Sigmoid colon (tissue), 7 donors: ENCODE measurements at regions of chr14 and their contacts with region 1.

Region 1: GRCh38 chr14:76647697-76648298 is 113.5 kb upstream of the VASH1 start:
- DNase-seq: no peak
- H3K4me3 ChIP-seq: no peak overlapping the region
- H3K27ac ChIP-seq: no peak overlapping the region
- H3K4me1 ChIP-seq: peaks cover 0 to 3% (median 0%) of the 10 kb centered on the region in 4 donors
- H3K27me3 ChIP-seq: no peaks in the 10 kb centered on the region
- CTCF ChIP-seq: peak; percentile 49 to 77 (median 62)
- EP300 ChIP-seq: no peak
- POLR2A ChIP-seq: no peak

Region 2: DNA sequence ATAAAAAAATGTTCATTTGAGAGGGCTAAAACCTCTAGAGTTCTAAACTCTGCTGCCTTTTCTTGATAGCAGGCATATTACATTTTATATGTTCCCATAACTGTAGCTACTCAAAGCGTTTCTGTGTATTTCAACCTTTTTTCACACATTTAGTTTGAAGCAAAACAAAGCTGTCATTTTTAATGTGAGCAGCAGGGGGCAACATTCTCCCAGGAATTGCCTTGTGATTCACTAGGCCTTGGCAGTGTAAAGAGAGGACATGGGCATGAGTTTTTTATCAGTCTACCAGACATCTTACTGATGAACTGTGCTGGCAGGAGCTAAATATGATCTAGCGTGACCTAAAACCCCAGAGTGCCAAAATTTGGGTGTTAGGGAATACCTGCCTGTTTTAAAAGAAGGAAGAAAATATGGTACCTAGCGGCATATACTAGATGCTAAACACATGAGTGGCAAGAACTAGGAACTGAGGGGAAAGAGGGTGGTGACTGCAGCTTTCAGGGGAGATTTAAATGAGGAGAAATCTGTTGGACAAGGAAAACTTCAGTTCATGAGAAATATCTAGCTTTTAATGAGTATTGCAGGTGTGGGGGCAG is 596.9 kb before region 1 on chr14:
- intact Hi-C with region 1: loop called (anchors 1 kb)
- DNase-seq: no peak
- H3K4me3 ChIP-seq: no peak overlapping the region
- H3K27ac ChIP-seq: no peak overlapping the region
- H3K4me1 ChIP-seq: no peaks in the 10 kb centered on the region
- H3K27me3 ChIP-seq: no peaks in the 10 kb centered on the region
- CTCF ChIP-seq: peak; percentile 74 to 85 (median 76)
- EP300 ChIP-seq: no peak
- POLR2A ChIP-seq: no peak

Region 3: GRCh38 chr14:76168531-76168930 is 479.3 kb before region 1 on chr14:
- intact Hi-C with region 1: no loop called
- DNase-seq: no peak
- H3K4me3 ChIP-seq: no peak overlapping the region
- H3K27ac ChIP-seq: no peak overlapping the region
- H3K4me1 ChIP-seq: peaks cover 0 to 13% (median 8%) of the 10 kb centered on the region in 4 donors
- H3K27me3 ChIP-seq: no peaks in the 10 kb centered on the region
- CTCF ChIP-seq: no peak
- EP300 ChIP-seq: no peak
- POLR2A ChIP-seq: no peak

Region 4: DNA sequence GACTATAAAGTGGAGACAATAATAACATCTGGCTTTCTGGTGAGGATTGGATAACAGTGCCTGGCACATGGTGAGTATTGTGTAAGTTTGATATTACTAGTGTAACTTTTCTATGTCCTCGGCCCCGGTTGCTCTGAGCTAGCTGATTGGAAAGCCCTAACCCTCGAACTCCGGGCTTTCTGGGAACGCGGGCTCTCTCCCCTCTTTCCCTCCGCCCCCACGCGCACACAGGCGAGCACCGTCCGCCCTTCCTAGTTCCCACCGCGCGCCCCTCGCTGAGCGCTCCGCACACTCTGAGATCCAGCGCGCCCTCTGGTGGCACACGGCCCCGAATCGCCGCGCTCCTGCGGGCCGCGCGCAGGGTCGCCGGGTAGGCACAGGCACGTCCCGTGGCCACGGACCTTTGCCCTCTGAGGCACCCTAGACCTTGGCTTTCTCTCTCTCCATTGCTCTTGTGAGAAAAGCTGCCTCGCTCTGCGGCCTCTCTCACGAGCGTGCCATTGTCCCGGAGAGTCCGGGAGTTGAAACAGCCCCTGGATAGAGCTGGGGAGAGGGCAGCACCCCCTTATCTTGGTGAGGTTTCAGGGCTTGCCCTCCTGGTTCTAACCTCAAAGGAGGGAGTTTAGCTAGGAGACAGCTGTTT is 295.0 kb before region 1 on chr14:
- intact Hi-C with region 1: loop called (anchors 5 kb)
- DNase-seq: no peak
- H3K4me3 ChIP-seq: peak overlapping the region in 3 of 4 donors; percentile 28 to 41 (median 30)
- H3K27ac ChIP-seq: no peak overlapping the region
- H3K4me1 ChIP-seq: peaks cover 0 to 10% (median 6%) of the 10 kb centered on the region in 4 donors
- H3K27me3 ChIP-seq: peaks cover 0 to 7% (median 4%) of the 10 kb centered on the region in 3 donors
- CTCF ChIP-seq: peak; percentile 66 to 87 (median 74)
- EP300 ChIP-seq: no peak
- POLR2A ChIP-seq: no peak

Region 5: GRCh38 chr14:76456200-76456599 is 191.6 kb before region 1 on chr14:
- intact Hi-C with region 1: loop called (anchors 2 kb)
- DNase-seq: no peak
- H3K4me3 ChIP-seq: no peak overlapping the region
- H3K27ac ChIP-seq: no peak overlapping the region
- H3K4me1 ChIP-seq: no peaks in the 10 kb centered on the region
- H3K27me3 ChIP-seq: no peaks in the 10 kb centered on the region
- CTCF ChIP-seq: peak; percentile 23 to 33 (median 28)
- EP300 ChIP-seq: no peak
- POLR2A ChIP-seq: no peak

Region 6: DNA sequence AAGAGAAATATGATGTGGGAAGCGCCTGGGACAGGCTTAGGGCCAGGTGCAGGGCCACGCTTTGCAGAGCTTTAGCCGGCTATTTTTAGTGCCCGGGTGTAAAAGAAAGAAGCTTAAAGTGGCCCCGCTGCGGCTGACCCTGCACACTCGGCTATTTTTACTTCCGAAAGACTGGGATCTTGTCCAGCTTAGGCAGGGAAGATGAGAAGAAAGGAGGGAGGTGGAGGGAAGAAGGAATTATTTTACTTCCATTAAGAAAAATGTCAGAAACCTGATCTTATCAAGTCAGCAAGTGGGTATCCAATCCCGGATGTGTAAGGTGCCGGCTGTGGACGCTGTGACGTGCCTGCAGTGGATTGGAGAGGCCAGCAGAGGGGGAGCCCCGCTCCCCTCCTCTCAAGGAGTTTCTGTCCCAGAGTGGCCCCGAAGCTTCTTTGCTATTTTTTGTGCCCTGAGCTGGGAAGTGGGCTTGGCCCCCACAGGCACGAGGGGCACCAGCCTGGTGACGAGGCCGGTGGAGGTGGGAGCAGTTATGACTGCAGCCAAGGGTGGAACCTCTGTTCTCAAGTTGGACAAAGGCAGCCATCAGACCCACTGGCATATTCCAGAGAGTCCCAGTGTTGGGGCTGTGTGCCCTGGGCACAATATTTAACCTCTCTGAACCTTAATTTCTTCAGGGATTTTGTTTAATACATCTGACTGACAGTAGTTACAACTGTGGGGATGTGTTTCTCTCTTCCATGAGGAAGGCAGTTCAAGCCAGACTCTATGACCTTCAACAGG is 174.1 kb before region 1 on chr14:
- intact Hi-C with region 1: loop called (anchors 5 kb)
- DNase-seq: no peak
- H3K4me3 ChIP-seq: peak overlapping the region in 3 of 4 donors; percentile 28 to 39 (median 35)
- H3K27ac ChIP-seq: peak overlapping the region in 2 of 4 donors; percentile 26 to 32
- H3K4me1 ChIP-seq: peaks cover 0 to 12% (median 9%) of the 10 kb centered on the region in 4 donors
- H3K27me3 ChIP-seq: no peaks in the 10 kb centered on the region
- CTCF ChIP-seq: peak in 1 of 4 experiments; percentile 32
- EP300 ChIP-seq: no peak
- POLR2A ChIP-seq: no peak

Region 7: DNA sequence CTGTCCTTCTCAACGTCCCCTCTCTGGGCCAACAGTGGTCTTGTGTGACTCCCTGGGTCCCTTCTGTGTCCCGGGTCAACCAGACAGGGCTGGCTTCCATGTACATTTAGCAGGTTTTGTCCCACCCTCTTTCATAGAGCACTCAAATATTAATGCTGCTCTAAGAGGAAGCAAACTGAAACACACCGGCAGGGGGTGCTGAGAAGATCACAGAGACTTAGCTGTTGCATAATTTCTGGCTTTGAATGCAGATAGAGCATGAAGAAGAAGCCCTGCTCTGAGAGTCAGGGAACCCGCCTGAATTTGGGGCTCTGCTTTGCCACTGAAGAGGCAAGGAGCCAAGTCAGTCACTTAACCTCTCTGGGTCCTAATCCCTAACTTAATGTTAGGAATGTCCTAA is 133.2 kb before region 1 on chr14:
- intact Hi-C with region 1: loop called (anchors 10 kb)
- DNase-seq: no peak
- H3K4me3 ChIP-seq: no peak overlapping the region
- H3K27ac ChIP-seq: no peak overlapping the region
- H3K4me1 ChIP-seq: no peaks in the 10 kb centered on the region
- H3K27me3 ChIP-seq: no peaks in the 10 kb centered on the region
- CTCF ChIP-seq: no peak
- EP300 ChIP-seq: no peak
- POLR2A ChIP-seq: no peak

Region 8: DNA sequence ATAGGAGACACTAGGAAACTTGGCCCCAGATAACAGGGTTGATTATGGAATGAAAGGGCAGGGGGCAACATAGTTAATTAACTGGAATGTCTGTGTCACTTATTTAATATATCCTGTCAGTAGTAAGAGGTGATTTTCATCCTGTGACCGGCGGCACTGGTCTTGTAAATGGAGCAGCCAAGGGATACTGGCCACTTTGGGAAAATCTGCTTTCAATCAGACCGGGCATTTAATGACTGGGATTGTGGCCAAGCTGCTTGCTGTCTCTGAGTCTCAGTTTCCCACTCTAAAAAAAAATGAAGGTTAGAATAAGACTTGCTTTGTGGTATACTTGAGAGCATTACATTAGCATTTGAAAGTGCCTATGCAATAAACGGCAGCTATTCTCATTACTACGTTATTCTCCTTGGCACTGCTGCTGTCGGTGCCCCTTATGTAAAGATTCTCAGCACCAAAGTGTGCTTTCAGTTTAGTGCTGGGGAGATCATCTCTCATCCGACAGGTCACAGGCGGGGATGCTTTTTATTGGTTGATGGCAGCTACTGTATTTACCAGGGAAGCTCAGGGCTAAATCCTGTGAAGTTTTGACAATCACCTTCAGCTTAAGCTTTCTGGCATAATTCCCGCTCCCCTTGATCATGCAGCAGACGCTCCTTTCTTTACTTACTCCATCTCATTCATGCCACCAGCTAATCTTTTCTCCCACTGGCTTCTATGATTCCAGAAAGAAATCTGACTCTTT is 109.7 kb before region 1 on chr14:
- intact Hi-C with region 1: loop called (anchors 5 kb)
- DNase-seq: peak; percentile 69
- H3K4me3 ChIP-seq: peak overlapping the region in 2 of 4 donors; percentile 1 to 16
- H3K27ac ChIP-seq: peak overlapping the region in 3 of 4 donors; percentile 43 to 49 (median 46)
- H3K4me1 ChIP-seq: peaks cover 0 to 16% (median 14%) of the 10 kb centered on the region in 4 donors
- H3K27me3 ChIP-seq: no peaks in the 10 kb centered on the region
- CTCF ChIP-seq: no peak
- EP300 ChIP-seq: peak in 1 of 4 donors; percentile 3
- POLR2A ChIP-seq: no peak